Activated naive CD4-positive, alpha-beta T cell treated with anti-CD3 and anti-CD28 coated beads for 36 hours (primary cell): ENCODE measurements at regions of chr17 and their contacts with region 1.

Region 1: GRCh38 chr17:48915459-48916282 is 7.5 kb downstream of the UBE2Z start:
- DNase-seq: peak; percentile 80
- H3K4me3 Mint-ChIP-seq: peak overlapping the region; percentile 62
- H3K27ac Mint-ChIP-seq: peak overlapping the region; percentile 92
- H3K4me1 Mint-ChIP-seq: peaks cover 60% of the 10 kb centered on the region
- H3K27me3 Mint-ChIP-seq: no peaks in the 10 kb centered on the region

Region 2: GRCh38 chr17:48841395-48841831 is 74.3 kb before region 1 on chr17:
- CTCF ChIA-PET with region 1: no interaction called
- intact Hi-C with region 1: loop called (anchors 1 kb)
- DNase-seq: peak; percentile 66
- H3K4me3 Mint-ChIP-seq: no peak overlapping the region
- H3K27ac Mint-ChIP-seq: peak overlapping the region; percentile 18
- H3K4me1 Mint-ChIP-seq: peaks cover 59% of the 10 kb centered on the region
- H3K27me3 Mint-ChIP-seq: no peaks in the 10 kb centered on the region

Region 3: DNA sequence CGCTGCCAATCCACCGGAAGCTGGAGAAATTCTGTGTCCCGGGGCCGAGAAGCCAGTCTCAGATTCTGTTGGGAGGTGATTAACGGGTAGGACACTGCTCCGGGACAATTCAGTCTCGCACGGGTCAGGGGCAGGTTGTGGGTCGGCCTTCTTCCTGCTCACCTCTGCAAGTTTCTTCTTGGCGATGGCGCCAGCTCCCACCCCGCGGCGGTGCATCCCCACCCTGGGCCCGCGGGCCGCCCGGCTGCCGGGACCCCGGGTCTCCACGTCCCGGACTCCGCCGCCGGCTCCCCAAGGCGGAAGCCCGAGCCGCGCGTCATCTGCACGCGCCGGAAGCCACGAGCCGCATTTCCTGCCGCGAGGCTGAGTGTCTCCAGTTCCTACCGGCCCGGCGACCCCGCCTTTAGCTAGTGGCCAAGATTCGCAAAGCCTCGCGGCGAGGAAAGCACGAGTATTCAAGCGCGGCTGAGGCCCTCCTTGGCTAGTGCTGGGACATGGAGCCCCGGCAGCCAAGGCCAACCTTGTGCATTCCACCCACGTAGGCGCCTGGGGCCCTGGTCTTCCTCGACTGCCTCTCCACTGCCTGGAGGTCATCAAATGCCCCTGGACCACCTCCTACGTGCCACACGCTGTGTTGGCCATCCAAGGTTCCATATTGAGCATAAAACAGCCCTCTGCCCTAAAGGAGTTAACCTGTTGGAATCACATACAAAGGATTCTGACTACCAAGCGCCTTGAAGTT is 29.0 kb after region 1 on chr17 and contains the start of gene SNF8:
- CTCF ChIA-PET with region 1: no interaction called
- intact Hi-C with region 1: loop called (anchors 1 kb)
- DNase-seq: peak; percentile 95
- H3K4me3 Mint-ChIP-seq: peak within 1 kb of the TSS; percentile 99
- H3K27ac Mint-ChIP-seq: peak within 1 kb of the TSS; percentile 89
- H3K4me1 Mint-ChIP-seq: peaks cover 18% of the 10 kb centered on the region
- H3K27me3 Mint-ChIP-seq: no peaks in the 10 kb centered on the region
- total RNA-seq, gene SNF8: 90.3 to 96.3 TPM

Region 4: DNA sequence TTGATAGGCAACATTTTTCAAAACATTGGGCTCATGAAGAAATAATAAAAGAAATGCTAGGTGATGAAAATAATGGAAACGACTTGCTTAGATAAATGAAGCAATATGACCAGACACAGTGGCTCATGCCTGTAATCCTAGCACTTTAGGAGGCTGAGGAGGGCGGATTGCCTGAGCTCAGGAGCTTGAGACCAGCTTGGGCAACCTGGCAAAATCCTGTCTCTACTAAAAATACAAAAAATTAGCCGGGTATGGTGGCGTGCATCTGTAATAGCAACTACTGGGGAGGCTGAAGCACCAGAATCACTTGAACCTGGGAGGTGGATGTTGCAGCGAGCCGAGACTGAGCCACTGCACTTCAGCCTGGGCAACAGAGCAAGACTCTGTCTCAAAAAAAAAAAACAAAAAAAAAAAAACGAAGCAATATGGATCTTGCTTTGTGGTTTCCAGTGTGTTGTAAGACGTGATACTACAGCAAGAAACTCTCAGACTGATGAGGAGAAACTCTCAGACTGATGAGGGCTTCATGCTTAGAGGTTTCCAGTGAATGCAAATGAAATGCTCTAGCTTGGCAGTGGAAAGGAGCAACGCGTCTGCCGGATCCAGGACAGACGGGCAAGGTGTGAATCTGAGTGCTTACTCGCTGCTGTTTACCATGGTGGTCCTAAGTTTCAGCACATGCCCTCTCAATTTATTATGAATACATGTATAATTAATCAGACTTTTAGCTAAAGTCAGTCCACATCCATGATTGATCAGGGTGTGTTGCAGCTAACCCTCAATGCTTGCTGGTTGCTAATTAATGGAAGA is 70.0 kb after region 1 on chr17:
- CTCF ChIA-PET with region 1: no interaction called
- intact Hi-C with region 1: no loop called
- DNase-seq: no peak
- H3K4me3 Mint-ChIP-seq: no peak overlapping the region
- H3K27ac Mint-ChIP-seq: no peak overlapping the region
- H3K4me1 Mint-ChIP-seq: no peaks in the 10 kb centered on the region
- H3K27me3 Mint-ChIP-seq: peaks cover 17% of the 10 kb centered on the region

Region 5: GRCh38 chr17:48997083-48997826 is 81.6 kb after region 1 on chr17 and contains the start of gene IGF2BP1:
- CTCF ChIA-PET with region 1: no interaction called
- intact Hi-C with region 1: no loop called
- DNase-seq: peak; percentile 29
- H3K4me3 Mint-ChIP-seq: peak within 1 kb of the TSS; percentile 65
- H3K27ac Mint-ChIP-seq: no peak within 1 kb of the TSS
- H3K4me1 Mint-ChIP-seq: peaks cover 29% of the 10 kb centered on the region
- H3K27me3 Mint-ChIP-seq: peaks cover 68% of the 10 kb centered on the region
- total RNA-seq, gene IGF2BP1: 0.57 to 0.60 TPM